Caco-2 (cell line): ENCODE measurements at regions of chr9 and their contacts with region 1.

Region 1: DNA sequence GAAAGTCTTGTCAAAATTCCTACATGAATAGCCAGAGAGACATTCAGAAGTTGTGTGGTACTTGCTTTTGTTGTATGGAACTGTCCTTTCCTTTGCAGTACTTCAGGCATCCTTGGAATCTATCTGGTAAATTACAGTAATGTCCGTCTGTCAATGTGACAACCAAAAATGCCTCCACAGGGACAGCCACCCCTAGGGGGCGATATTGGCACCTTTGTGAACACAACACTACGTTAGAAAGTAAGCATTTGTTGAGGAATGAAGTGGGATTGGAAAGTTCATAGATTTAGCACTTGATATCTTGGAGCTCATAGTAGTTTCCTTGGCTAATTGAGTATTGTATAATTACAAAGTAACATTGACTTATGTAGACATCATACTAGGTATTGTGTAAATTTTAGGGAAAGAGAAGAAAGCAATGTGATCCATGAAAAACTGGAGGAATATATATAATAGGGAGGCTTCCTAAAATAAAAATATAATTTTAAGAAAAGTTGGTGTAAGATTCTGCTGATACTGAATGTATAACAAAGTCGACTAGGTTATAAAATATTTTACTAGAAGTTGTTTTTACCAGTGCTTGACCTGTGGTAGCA is 32.7 kb downstream of the TMEFF1 start:
- DNase-seq: peak; percentile 88 to 90
- H3K4me3 ChIP-seq: no peak overlapping the region
- H3K4me3 Mint-ChIP-seq: no peak overlapping the region
- H3K27ac Mint-ChIP-seq: no peak overlapping the region
- H3K4me1 ChIP-seq: no peaks in the 10 kb centered on the region
- H3K4me1 Mint-ChIP-seq: peaks cover 6% of the 10 kb centered on the region
- H3K27me3 ChIP-seq: no peaks in the 10 kb centered on the region
- H3K27me3 Mint-ChIP-seq: no peaks in the 10 kb centered on the region
- CTCF ChIP-seq: peak; percentile 74 to 78

Region 2: DNA sequence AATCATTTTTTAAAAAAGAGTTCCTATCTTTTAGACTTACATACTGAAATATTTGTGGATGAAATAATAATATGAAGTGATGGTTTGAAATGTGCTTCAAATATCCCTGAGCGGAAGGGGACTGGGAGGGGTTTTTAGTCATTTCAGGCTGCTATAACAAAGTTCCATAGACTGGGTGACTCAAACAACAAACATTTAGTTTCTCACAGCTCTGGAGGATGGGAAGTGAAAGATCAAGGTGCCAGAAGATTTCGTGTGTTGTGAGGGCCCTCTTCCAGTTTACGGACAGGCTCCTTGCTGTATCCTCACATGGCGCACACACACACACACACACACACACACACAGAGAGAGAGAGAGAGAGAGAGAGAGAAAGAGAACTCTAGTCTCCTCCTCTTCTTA is 125.8 kb before region 1 on chr9:
- CTCF ChIA-PET with region 1: no interaction called
- POLR2A ChIA-PET with region 1: no interaction called
- intact Hi-C with region 1: no loop called
- DNase-seq: no peak
- H3K4me3 ChIP-seq: no peak overlapping the region
- H3K4me3 Mint-ChIP-seq: no peak overlapping the region
- H3K27ac Mint-ChIP-seq: peak overlapping the region; percentile 21
- H3K4me1 ChIP-seq: peaks cover 4% of the 10 kb centered on the region; the same call in 1 of the 2 replicates
- H3K4me1 Mint-ChIP-seq: peaks cover 13% of the 10 kb centered on the region
- H3K27me3 ChIP-seq: no peaks in the 10 kb centered on the region
- H3K27me3 Mint-ChIP-seq: no peaks in the 10 kb centered on the region
- CTCF ChIP-seq: no peak

Region 3: DNA sequence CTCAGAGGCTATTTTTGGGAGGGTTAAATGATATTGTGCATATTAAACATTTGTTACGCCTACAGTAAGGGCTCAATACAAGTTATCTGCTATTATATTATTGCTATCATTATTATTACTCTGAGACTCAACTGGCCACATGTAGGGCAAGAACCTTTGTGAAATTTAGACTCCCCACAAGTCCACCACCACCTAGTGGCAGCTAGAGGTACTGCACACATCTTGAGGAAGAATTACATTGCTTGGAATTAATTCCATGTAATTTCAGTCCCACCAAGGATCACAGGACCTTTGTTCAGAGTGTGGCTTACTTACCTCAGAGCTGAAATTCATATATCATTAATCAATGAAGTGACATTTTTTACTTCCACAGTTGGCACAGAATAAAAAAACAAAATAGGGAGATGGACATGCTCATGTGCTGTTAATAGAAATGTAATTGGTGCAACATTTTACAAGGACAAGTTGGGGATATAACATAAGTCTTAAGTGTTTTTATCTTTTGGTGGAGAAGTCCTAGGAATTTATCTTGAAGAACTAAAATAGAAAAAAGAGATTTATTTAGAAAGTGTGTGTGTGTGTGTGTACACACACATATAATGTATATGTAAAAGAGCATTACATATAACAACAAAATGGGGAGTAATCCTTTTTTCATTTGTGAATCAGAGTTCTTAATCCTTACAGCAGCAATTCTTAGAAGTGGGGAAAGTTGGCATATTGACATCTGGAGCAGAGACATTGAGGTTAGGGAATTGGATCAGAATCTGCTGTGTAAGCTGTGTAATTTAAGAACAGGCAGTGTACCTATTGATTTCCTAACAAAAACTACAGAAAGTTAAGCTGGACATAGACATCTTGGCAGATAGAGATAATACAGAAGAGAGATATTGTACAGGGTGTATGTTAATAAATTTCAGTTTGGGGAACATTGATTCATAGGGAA is 67.5 kb before region 1 on chr9:
- CTCF ChIA-PET with region 1: interaction called, 4 read pairs
- POLR2A ChIA-PET with region 1: no interaction called
- intact Hi-C with region 1: loop called (anchors 5 kb)
- DNase-seq: peak; percentile 78 to 79
- H3K4me3 ChIP-seq: no peak overlapping the region
- H3K4me3 Mint-ChIP-seq: no peak overlapping the region
- H3K27ac Mint-ChIP-seq: peak overlapping the region; percentile 12
- H3K4me1 ChIP-seq: no peaks in the 10 kb centered on the region
- H3K4me1 Mint-ChIP-seq: peaks cover 17% of the 10 kb centered on the region
- H3K27me3 ChIP-seq: no peaks in the 10 kb centered on the region
- H3K27me3 Mint-ChIP-seq: no peaks in the 10 kb centered on the region
- CTCF ChIP-seq: peak; percentile 85 to 94

Region 4: GRCh38 chr9:100477241-100477640 is 28.4 kb before region 1 on chr9:
- CTCF ChIA-PET with region 1: no interaction called
- POLR2A ChIA-PET with region 1: no interaction called
- intact Hi-C with region 1: no loop called
- DNase-seq: no peak
- H3K4me3 ChIP-seq: no peak overlapping the region
- H3K4me3 Mint-ChIP-seq: no peak overlapping the region
- H3K27ac Mint-ChIP-seq: no peak overlapping the region
- H3K4me1 ChIP-seq: peaks cover 3% of the 10 kb centered on the region; the same call in 1 of the 2 replicates
- H3K4me1 Mint-ChIP-seq: peaks cover 6% of the 10 kb centered on the region
- H3K27me3 ChIP-seq: no peaks in the 10 kb centered on the region
- H3K27me3 Mint-ChIP-seq: peaks cover 3% of the 10 kb centered on the region
- CTCF ChIP-seq: no peak

Region 5: DNA sequence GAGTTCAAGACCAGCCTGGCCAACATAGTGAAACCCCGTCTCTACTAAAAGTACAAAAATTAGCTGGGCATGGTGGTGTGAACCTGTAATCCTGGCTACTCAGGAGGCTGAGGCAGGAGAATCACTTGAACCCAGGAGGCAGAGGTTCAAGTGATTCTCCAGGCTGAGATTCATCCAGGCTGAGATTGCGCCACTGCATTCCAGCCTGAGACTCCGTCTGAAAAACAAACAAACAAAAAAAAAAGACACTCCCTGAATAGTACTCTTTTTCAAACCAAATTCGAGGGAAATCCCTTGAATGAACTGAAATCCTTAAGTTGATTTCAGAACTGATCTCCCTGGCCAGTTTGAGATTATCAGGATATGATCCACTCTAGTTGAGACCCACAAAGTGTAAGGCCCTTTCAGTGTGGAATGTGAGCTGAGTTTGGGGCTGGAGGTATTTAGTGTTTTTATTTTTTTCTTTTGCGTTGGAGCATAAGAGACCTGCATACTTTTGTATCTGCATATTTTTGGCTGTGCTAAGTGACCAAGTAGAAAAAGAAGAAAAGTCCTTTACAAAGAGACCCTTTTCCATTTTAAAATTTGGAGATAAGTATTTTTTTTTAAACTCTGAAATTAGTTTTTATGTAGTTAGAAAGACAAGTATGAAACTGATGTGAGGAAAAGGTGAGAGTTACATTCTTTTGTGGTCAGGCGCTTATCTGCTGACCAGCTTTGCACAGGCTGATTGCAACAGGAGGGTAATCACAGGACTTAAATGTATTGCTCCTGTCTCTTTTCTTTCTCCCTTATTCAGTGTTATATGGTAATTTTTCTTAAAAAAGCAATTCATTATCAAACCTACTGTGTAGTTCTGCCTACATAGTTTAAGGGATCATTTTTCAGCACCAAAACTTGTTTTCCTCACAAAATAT is 10.2 kb after region 1 on chr9:
- CTCF ChIA-PET with region 1: no interaction called
- POLR2A ChIA-PET with region 1: no interaction called
- intact Hi-C with region 1: loop called (anchors 1 kb)
- DNase-seq: peak in 1 of 2 experiments; percentile 35
- H3K4me3 ChIP-seq: no peak overlapping the region
- H3K4me3 Mint-ChIP-seq: peak overlapping the region; percentile 55
- H3K27ac Mint-ChIP-seq: peak overlapping the region; percentile 38
- H3K4me1 ChIP-seq: no peaks in the 10 kb centered on the region; the same call in 1 of the 2 replicates
- H3K4me1 Mint-ChIP-seq: peaks cover 17% of the 10 kb centered on the region
- H3K27me3 ChIP-seq: no peaks in the 10 kb centered on the region
- H3K27me3 Mint-ChIP-seq: no peaks in the 10 kb centered on the region
- CTCF ChIP-seq: no peak

Region 6: GRCh38 chr9:100525563-100525962 is 19.9 kb after region 1 on chr9:
- CTCF ChIA-PET with region 1: no interaction called
- POLR2A ChIA-PET with region 1: no interaction called
- intact Hi-C with region 1: loop called (anchors 1 kb)
- DNase-seq: no peak
- H3K4me3 ChIP-seq: no peak overlapping the region
- H3K4me3 Mint-ChIP-seq: no peak overlapping the region
- H3K27ac Mint-ChIP-seq: no peak overlapping the region
- H3K4me1 ChIP-seq: no peaks in the 10 kb centered on the region
- H3K4me1 Mint-ChIP-seq: no peaks in the 10 kb centered on the region
- H3K27me3 ChIP-seq: no peaks in the 10 kb centered on the region
- H3K27me3 Mint-ChIP-seq: no peaks in the 10 kb centered on the region
- CTCF ChIP-seq: no peak

Region 7: DNA sequence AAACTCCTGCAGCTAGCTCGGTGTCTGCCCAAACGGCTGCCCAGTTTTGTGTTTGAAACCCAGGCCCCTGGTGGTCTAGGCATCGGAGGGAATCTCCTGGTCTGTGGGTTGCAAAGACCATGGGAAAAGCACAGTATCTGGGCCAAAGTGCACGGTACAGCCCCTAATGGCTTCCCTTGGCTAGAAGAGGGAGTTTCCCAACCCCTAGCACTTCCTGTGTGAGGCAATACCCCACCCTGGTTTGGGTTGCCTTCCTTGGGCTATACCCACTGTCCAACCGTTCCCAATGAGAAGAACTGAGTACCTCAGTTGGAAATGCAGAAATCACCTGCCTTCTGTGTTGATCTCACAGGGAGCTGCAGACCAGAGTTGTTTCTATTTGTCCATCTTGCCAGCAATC is 114.0 kb after region 1 on chr9:
- CTCF ChIA-PET with region 1: no interaction called
- POLR2A ChIA-PET with region 1: no interaction called
- intact Hi-C with region 1: no loop called
- DNase-seq: no peak
- H3K4me3 ChIP-seq: no peak overlapping the region
- H3K4me3 Mint-ChIP-seq: no peak overlapping the region
- H3K27ac Mint-ChIP-seq: no peak overlapping the region
- H3K4me1 ChIP-seq: no peaks in the 10 kb centered on the region
- H3K4me1 Mint-ChIP-seq: no peaks in the 10 kb centered on the region
- H3K27me3 ChIP-seq: no peaks in the 10 kb centered on the region
- H3K27me3 Mint-ChIP-seq: no peaks in the 10 kb centered on the region
- CTCF ChIP-seq: no peak